Heart left ventricle (tissue), 16 donors: ENCODE measurements at regions of chr10 and their contacts with region 1.

Region 1: GRCh38 chr10:21265621-21266020 is 259.9 kb downstream of the SKIDA1 start:
- DNase-seq: no peak
- ATAC-seq: no peak
- H3K4me3 ChIP-seq: no peak overlapping the region
- H3K27ac ChIP-seq: no peak overlapping the region
- H3K4me1 ChIP-seq: no peaks in the 10 kb centered on the region
- H3K27me3 ChIP-seq: no peaks in the 10 kb centered on the region
- CTCF ChIP-seq: no peak
- POLR2A ChIP-seq: no peak

Region 2: GRCh38 chr10:20858292-20859124 is 407.1 kb before region 1 on chr10:
- intact Hi-C with region 1: loop called in 5 of 10 experiments (anchors 5 to 10 kb)
- DNase-seq: no peak
- ATAC-seq: no peak
- H3K4me3 ChIP-seq: no peak overlapping the region
- H3K27ac ChIP-seq: no peak overlapping the region
- H3K4me1 ChIP-seq: peaks cover 0 to 22% (median 3%) of the 10 kb centered on the region in 12 donors
- H3K27me3 ChIP-seq: no peaks in the 10 kb centered on the region
- CTCF ChIP-seq: peak; percentile 18 to 58 (median 44)
- POLR2A ChIP-seq: no peak

Region 3: GRCh38 chr10:21092683-21093524 is 172.7 kb before region 1 on chr10:
- intact Hi-C with region 1: loop called in 2 of 10 experiments (anchors 5 kb)
- DNase-seq: no peak
- ATAC-seq: no peak
- H3K4me3 ChIP-seq: no peak overlapping the region
- H3K27ac ChIP-seq: no peak overlapping the region
- H3K4me1 ChIP-seq: peaks cover 0 to 12% (median 0%) of the 10 kb centered on the region in 12 donors
- H3K27me3 ChIP-seq: no peaks in the 10 kb centered on the region
- CTCF ChIP-seq: no peak
- POLR2A ChIP-seq: no peak

Region 4: DNA sequence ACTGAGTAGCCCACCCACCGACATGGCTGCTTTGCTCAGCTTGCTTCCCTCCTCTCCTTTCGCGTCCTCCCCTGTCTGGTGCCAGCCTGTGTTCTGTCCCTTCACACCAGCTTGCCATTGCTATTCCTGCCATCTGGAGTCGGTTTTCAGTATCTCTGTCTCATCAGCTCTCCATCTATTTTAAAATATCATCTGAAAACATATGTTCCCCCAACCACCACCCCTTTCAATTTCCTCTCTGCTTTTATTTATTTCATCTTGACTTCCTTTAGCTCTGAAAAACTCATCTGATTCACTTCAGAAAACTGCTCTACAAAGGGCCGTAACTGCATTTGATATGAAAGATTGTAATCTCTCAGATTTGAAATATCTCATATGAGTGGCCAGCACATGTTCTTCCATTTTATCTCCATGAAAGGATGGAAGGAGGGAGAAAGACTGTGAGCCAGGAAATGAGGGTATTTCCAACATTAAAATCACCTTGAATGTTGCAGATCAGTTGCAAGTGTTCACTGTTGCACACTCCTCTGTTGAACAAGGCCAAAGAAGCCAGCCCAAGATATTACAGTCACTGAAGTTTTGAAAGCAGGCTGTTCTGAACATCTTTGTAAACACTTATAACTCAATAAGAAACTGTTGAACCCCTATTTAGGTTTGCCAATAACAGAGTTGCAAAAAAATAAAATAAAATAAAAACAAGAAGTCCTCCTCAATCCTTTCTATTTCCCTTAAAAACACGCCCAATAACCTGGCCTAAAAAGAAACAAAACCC is 166.1 kb before region 1 on chr10:
- intact Hi-C with region 1: loop called in 2 of 10 experiments (anchors 5 kb)
- DNase-seq: peak in 1 of 5 donors; percentile 30
- ATAC-seq: peak in 2 of 4 donors; percentile 75
- H3K4me3 ChIP-seq: no peak overlapping the region
- H3K27ac ChIP-seq: peak overlapping the region in 1 of 12 donors; percentile 23
- H3K4me1 ChIP-seq: peaks cover 0 to 16% (median 0%) of the 10 kb centered on the region in 12 donors
- H3K27me3 ChIP-seq: no peaks in the 10 kb centered on the region
- CTCF ChIP-seq: no peak
- POLR2A ChIP-seq: no peak